ENCODE measurements at regions of chr11 and their contacts with region 1.

Region 1: DNA sequence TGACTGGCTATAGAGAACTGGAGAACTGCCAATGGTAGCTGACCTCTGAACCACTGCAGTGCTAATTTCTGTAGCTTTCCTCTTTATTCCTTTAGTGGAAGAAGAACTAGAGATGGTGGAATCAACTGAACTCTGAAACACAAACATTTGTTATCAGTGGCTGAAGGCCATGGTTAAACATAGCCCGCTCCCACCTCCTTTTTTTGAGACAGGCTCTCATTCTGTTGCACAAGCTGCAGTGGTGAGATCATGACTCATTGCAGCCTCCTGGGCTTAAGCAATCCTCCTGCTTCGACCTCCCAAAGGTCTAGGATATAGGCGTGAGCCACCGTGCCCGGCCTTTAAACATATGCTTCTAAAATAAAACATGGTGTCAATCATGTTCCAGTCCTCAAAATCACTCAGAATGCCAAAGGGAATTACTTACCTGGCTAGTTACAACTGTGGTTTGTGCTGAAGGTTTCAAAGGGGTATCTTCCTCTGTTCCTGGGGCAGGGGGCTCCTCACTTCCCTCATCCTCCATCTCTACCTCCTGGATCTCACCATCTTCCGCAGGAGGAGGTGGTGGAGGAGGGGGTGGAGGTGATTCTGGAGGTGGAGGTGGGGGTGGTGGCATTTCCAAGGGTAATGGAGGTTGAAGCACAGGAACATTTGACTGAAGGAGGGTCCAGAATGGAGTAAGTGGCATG is 9.0 kb upstream of the AGBL2 start:
- DNase-seq: no peak
- ATAC-seq: no peak
- H3K4me3 ChIP-seq: no peak overlapping the region
- H3K4me3 Mint-ChIP-seq: no peak overlapping the region
- H3K27ac ChIP-seq: no peak overlapping the region
- H3K27ac Mint-ChIP-seq: peak overlapping the region; percentile 44 to 50
- H3K4me1 ChIP-seq: no peaks in the 10 kb centered on the region
- H3K4me1 Mint-ChIP-seq: peaks cover 0 to 2% (median 2%) of the 10 kb centered on the region in 3 donors
- H3K27me3 ChIP-seq: no peaks in the 10 kb centered on the region
- H3K27me3 Mint-ChIP-seq: no peaks in the 10 kb centered on the region

Region 2: DNA sequence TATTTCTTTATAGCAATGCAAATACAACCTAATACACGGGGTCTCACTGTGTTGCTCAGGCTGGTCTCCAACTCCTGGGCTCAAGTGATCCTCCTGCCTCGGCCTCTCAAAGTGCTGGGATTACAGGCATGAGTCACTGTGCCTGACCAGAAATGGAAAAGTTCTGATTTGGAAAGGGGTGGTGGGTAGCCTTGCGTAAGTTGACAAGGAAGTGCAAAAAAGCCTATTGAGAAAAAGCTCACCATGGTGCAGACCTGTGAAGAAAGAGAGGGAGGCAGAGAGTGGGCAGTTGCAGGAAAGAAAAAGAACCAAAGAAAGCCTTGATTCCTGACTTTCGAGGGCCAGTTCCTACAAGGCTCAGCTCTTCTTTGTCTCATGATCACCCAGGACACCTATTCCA is 36.1 kb before region 1 on chr11:
- CTCF ChIA-PET with region 1: no interaction called
- POLR2A ChIA-PET with region 1: interaction called in 1 of 2 experiments, 15 read pairs
- DNase-seq: no peak
- ATAC-seq: no peak
- H3K4me3 ChIP-seq: no peak overlapping the region
- H3K4me3 Mint-ChIP-seq: no peak overlapping the region
- H3K27ac ChIP-seq: no peak overlapping the region
- H3K27ac Mint-ChIP-seq: no peak overlapping the region
- H3K4me1 ChIP-seq: no peaks in the 10 kb centered on the region
- H3K4me1 Mint-ChIP-seq: peaks cover 5 to 8% (median 5%) of the 10 kb centered on the region in 3 donors
- H3K27me3 ChIP-seq: no peaks in the 10 kb centered on the region
- H3K27me3 Mint-ChIP-seq: no peaks in the 10 kb centered on the region